Breast epithelium (tissue), 4 donors: ENCODE measurements at regions of chr14 and their contacts with region 1.

Region 1: GRCh38 chr14:22864979-22865378 is 6.6 kb upstream of the LRP10 start:
- DNase-seq: no peak
- H3K4me3 ChIP-seq: no peak overlapping the region
- H3K27ac ChIP-seq: no peak overlapping the region
- H3K4me1 ChIP-seq: no peaks in the 10 kb centered on the region
- H3K27me3 ChIP-seq: no peaks in the 10 kb centered on the region
- CTCF ChIP-seq: no peak
- POLR2A ChIP-seq: no peak

Region 2: DNA sequence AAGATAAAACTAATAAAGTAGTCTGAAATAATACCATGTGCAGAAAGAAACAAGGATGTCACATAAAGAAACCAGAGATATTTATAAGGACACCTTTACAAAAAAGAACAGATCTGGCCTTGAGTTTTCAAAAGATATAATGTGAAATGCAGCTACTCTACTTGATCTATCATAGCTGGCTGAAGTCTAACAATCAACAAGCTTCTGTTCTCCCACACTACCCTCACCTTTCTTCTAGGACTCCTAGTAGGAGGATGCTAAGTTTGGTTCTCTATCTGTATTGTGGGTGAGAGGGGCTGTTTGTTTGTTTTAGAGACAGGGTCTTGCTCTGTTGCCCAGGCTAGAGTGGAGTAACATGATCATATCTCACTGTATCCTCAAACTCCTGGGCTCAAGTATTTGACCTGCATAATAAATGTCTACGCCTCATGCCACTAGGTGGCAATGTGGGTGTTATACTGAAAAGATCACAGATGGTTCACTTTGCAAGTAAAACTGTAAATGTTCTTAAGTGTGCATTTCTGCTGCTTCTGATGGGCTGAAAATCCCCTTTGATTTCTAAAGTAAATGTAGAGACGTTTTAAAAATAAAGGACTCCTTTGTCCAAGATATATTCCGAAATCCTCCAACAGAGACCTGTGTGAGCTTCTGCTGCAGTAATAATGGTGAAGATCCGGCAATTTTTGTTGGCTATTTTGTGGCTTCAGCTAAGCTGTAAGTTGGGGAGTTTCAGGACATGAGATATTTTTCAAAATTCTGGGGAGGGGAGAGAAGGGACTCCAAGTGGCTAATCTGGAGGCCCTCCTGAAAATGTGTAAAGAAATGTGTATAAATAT is 545.2 kb before region 1 on chr14:
- intact Hi-C with region 1: no loop called
- DNase-seq: peak in 1 of 2 donors; percentile 44
- H3K4me3 ChIP-seq: no peak overlapping the region
- H3K27ac ChIP-seq: no peak overlapping the region
- H3K4me1 ChIP-seq: no peaks in the 10 kb centered on the region
- H3K27me3 ChIP-seq: no peaks in the 10 kb centered on the region
- CTCF ChIP-seq: peak; percentile 51 to 58 (median 52)
- POLR2A ChIP-seq: no peak

Region 3: GRCh38 chr14:22939684-22940083 is 74.7 kb after region 1 on chr14:
- intact Hi-C with region 1: loop called (anchors 5 kb)
- DNase-seq: no peak
- H3K4me3 ChIP-seq: no peak overlapping the region
- H3K27ac ChIP-seq: no peak overlapping the region
- H3K4me1 ChIP-seq: no peaks in the 10 kb centered on the region
- H3K27me3 ChIP-seq: no peaks in the 10 kb centered on the region
- CTCF ChIP-seq: no peak
- POLR2A ChIP-seq: no peak